OCI-LY7 (cell line): ENCODE measurements at regions of chr3 and their contacts with region 1.

Region 1: DNA sequence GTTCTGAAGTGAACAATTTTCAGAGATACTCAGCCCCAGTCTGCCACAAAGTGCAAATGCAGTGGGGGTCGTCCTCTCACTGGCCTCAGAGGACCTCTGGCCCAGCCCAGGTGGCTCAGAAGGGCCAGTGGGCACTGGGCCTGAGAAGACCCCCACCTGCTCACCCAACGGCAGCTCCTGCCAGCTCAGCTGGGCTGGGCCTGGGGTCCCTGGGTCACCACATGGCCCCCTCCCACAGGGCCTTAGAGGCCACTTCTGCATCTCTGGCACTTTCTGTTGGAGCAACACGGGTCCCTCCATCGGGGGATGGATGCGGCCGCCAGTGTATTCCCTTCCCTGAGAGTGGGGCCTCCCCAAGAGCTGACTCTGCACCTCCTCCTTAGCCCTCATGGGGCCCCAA is 262.7 kb upstream of the KCNH8 start:
- DNase-seq: no peak
- H3K4me3 ChIP-seq: no peak overlapping the region
- H3K27ac ChIP-seq: no peak overlapping the region
- H3K4me1 ChIP-seq: peaks cover 12% of the 10 kb centered on the region
- CTCF ChIP-seq: no peak

Region 2: GRCh38 chr3:18443665-18444594 is 441.7 kb before region 1 on chr3:
- CTCF ChIA-PET with region 1: no interaction called
- POLR2A ChIA-PET with region 1: no interaction called
- intact Hi-C with region 1: no loop called
- DNase-seq: no peak
- H3K4me3 ChIP-seq: peak overlapping the region; percentile 36
- H3K27ac ChIP-seq: no peak overlapping the region
- H3K4me1 ChIP-seq: peaks cover 36% of the 10 kb centered on the region
- CTCF ChIP-seq: no peak

Region 3: DNA sequence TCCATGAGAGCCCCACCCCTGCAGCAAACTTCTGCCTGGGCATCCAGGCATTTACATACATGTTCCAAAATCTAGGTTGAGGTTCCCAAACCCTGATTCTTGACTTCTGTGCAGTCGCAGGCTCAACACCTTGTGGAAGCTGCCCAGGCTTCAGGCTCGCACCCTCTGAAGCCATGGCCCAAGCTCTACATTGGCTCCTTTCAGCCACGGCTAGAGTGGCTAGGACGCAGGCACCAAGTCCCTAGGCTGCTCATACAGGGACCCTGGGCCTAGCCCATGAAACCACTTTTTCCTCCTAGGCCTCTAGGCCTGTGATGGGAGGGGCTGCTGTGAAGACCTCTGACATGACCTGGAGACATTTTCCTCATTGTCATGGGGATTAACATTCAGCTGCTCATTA is 287.7 kb before region 1 on chr3:
- CTCF ChIA-PET with region 1: no interaction called
- POLR2A ChIA-PET with region 1: no interaction called
- intact Hi-C with region 1: no loop called
- DNase-seq: no peak
- H3K4me3 ChIP-seq: no peak overlapping the region
- H3K27ac ChIP-seq: no peak overlapping the region
- H3K4me1 ChIP-seq: no peaks in the 10 kb centered on the region
- CTCF ChIP-seq: no peak

Region 4: DNA sequence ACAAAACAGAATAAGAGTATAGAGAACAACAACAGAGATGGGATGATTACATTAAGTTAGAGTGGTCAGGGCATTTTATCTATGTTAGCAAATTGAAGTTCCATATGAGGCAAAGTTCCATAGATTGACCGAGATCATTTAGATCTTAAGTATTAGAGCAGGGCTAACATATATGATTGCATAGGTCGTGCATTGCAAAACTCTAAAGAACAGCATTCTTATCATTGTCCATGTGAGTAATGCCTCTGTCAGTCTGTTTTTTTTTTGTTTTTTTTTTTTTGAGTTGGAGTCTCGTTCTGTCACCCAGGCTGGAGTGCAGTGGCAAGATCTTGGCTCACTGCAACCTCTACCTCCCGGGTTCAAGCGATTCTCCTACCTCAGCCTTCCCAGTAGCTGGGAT is 79.0 kb before region 1 on chr3:
- CTCF ChIA-PET with region 1: no interaction called
- POLR2A ChIA-PET with region 1: no interaction called
- intact Hi-C with region 1: no loop called
- DNase-seq: no peak
- H3K4me3 ChIP-seq: no peak overlapping the region
- H3K27ac ChIP-seq: no peak overlapping the region
- H3K4me1 ChIP-seq: no peaks in the 10 kb centered on the region
- CTCF ChIP-seq: no peak

Region 5: GRCh38 chr3:18872466-18872865 is 13.1 kb before region 1 on chr3:
- CTCF ChIA-PET with region 1: interaction called, 3 read pairs
- POLR2A ChIA-PET with region 1: interaction called, 11 read pairs
- intact Hi-C with region 1: no loop called
- DNase-seq: peak; percentile 38
- H3K4me3 ChIP-seq: no peak overlapping the region
- H3K27ac ChIP-seq: no peak overlapping the region
- H3K4me1 ChIP-seq: peaks cover 12% of the 10 kb centered on the region
- CTCF ChIP-seq: peak; percentile 63

Region 6: DNA sequence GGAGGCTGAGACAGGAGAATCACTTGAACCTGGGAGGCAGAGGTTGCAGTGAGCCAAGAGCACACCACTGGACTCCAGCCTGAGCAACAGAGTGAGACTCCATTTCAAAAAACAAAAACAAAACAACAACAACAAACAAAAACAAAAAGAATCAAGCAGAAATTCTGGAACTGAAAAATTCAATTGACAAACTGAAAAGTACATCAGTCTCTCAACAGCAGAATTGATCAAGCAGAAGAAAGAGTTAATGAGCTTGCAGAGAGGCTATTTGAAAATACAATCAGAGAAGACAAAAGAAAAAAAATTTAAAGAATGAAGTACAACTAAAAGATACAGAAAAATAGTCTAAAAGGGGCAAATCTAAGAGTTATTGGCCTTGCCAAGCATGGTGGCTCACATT is 1025.8 kb after region 1 on chr3:
- CTCF ChIA-PET with region 1: no interaction called
- POLR2A ChIA-PET with region 1: no interaction called
- intact Hi-C with region 1: no loop called
- DNase-seq: no peak
- H3K4me3 ChIP-seq: no peak overlapping the region
- H3K27ac ChIP-seq: no peak overlapping the region
- H3K4me1 ChIP-seq: no peaks in the 10 kb centered on the region
- CTCF ChIP-seq: no peak